ENCODE measurements at regions of chr9 and their contacts with region 1.

Region 1: DNA sequence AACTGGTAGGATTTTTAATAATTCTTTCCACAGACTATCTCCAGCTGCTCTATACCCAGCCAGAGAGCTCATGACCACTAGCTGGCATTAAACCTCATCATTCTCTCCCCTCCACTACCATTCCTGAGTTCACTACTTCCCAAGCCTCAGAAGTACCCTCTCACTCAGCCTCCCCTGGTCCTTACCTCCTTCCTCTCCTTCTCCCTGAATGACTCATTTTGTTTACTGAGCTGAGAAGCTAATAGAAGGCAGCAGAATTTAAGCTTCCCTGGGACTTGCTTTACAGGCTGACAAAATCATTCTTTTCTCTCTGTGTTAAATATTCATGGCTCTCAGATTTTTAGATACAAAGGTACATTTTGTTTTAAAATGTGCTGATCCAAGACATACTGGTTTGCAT is 305.4 kb downstream of the TLR4 start:
- DNase-seq: no peak
- ATAC-seq: no peak
- H3K4me3 ChIP-seq: no peak overlapping the region
- H3K27ac ChIP-seq: no peak overlapping the region
- H3K4me1 ChIP-seq: no peaks in the 10 kb centered on the region
- H3K27me3 ChIP-seq: no peaks in the 10 kb centered on the region
- CTCF ChIP-seq: no peak

Region 2: DNA sequence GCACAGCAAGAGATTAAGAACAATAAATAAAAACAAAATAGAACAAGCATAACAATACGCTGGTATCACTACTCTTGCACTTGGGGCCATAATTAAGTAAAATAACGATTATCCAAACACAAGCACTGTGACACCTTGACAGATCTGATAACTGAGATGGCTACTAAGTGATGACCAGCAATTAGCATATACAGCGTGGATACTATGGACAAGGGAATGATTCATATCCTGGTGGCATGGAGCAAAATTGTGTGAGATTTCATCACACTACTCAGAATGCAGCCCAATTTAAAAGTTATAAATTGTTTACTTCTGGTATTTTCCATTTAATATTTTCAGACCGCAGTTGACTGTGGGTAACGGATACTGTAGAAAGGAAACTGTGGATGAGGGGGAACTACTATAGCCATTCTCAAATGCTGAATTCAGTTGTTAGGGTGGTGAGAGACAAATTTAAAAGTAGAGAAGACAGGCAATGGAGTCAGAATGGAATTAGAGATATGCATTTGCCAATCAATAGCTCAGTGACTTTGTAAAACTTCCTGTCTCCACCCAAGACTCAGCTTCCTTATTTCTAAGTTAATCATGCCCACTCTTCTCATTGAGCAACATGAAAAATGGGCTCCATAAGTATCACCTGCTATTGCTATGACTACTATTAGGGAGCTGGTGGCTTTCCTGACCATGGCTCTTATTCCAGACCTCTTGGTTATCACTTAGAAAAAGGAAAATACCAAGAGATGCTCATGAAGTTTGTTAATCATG is 1021.7 kb before region 1 on chr9:
- intact Hi-C with region 1: no loop called
- DNase-seq: no peak
- ATAC-seq: no peak
- H3K4me3 ChIP-seq: no peak overlapping the region
- H3K27ac ChIP-seq: no peak overlapping the region
- H3K4me1 ChIP-seq: no peaks in the 10 kb centered on the region
- H3K27me3 ChIP-seq: no peaks in the 10 kb centered on the region
- CTCF ChIP-seq: no peak

Region 3: GRCh38 chr9:117970276-117970675 is 39.3 kb before region 1 on chr9:
- intact Hi-C with region 1: loop called in 1 of 10 experiments (anchors 1 kb)
- DNase-seq: no peak
- ATAC-seq: no peak
- H3K4me3 ChIP-seq: no peak overlapping the region
- H3K27ac ChIP-seq: no peak overlapping the region
- H3K4me1 ChIP-seq: no peaks in the 10 kb centered on the region
- H3K27me3 ChIP-seq: no peaks in the 10 kb centered on the region
- CTCF ChIP-seq: no peak